ENCODE measurements at regions of chr7 and their contacts with region 1.

Region 1: GRCh38 chr7:50467817-50468610 is 17.9 kb upstream of the FIGNL1 start:
- DNase-seq: peak; percentile 73 to 81 (median 81)
- H3K4me3 ChIP-seq: peak overlapping the region in 2 of 7 experiments; percentile 36 to 65
- H3K27ac ChIP-seq: no peak overlapping the region
- H3K4me1 ChIP-seq: peaks cover 0 to 10% (median 6%) of the 10 kb centered on the region in 4 experiments
- H3K27me3 ChIP-seq: no peaks in the 10 kb centered on the region

Region 2: DNA sequence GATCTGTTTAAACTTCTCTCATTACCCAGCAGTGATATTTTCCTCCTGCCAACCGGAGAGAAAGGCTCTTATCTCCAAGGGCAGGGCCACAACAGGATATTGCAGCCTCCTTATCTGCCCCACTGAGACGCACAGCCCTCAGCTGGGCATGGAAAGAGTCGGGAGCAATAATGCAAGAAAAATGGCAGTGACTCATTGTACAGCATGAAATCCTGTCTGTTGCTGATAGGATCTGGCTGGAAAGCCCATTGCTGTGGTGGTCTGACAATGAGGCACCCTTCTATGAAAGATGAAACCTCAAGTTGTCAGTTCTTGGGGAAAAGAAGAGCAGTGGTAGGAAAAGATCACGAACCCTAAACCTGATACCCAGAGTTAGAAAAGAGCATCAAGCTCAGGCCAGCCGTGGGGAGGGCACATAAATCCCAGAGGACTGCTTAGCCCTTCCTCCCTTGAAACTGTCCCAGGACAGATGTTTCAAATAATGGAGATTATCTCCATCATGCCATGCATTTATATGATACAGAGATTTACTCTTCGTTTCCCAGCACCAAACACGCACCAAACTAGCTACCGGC is 29.1 kb after region 1 on chr7:
- CTCF ChIA-PET with region 1: interaction called, 25 read pairs
- POLR2A ChIA-PET with region 1: no interaction called
- DNase-seq: peak; percentile 93 to 96 (median 93)
- H3K4me3 ChIP-seq: peak overlapping the region in 3 of 7 experiments; percentile 8 to 53 (median 38)
- H3K27ac ChIP-seq: peak overlapping the region; percentile 51 to 74
- H3K4me1 ChIP-seq: peaks cover 10 to 50% (median 26%) of the 10 kb centered on the region in 4 experiments
- H3K27me3 ChIP-seq: no peaks in the 10 kb centered on the region

Region 3: GRCh38 chr7:50587737-50588136 is 119.7 kb after region 1 on chr7:
- CTCF ChIA-PET with region 1: interaction called, 13 read pairs
- POLR2A ChIA-PET with region 1: no interaction called
- DNase-seq: no peak
- H3K4me3 ChIP-seq: no peak overlapping the region
- H3K27ac ChIP-seq: no peak overlapping the region
- H3K4me1 ChIP-seq: no peaks in the 10 kb centered on the region
- H3K27me3 ChIP-seq: no peaks in the 10 kb centered on the region

Region 4: GRCh38 chr7:50610521-50611277 is 142.7 kb after region 1 on chr7:
- CTCF ChIA-PET with region 1: interaction called, 18 read pairs
- POLR2A ChIA-PET with region 1: no interaction called
- DNase-seq: peak; percentile 71 to 96 (median 93)
- H3K4me3 ChIP-seq: no peak overlapping the region
- H3K27ac ChIP-seq: peak overlapping the region in 1 of 2 experiments; percentile 29
- H3K4me1 ChIP-seq: peaks cover 5 to 30% (median 24%) of the 10 kb centered on the region in 4 experiments
- H3K27me3 ChIP-seq: no peaks in the 10 kb centered on the region

Region 5: GRCh38 chr7:50664461-50664922 is 196.5 kb after region 1 on chr7:
- CTCF ChIA-PET with region 1: interaction called, 15 read pairs
- POLR2A ChIA-PET with region 1: no interaction called
- DNase-seq: peak; percentile 53 to 95 (median 90)
- H3K4me3 ChIP-seq: peak overlapping the region in 2 of 7 experiments; percentile 26 to 32
- H3K27ac ChIP-seq: peak overlapping the region in 1 of 2 experiments; percentile 68
- H3K4me1 ChIP-seq: peaks cover 12 to 70% (median 66%) of the 10 kb centered on the region in 4 experiments
- H3K27me3 ChIP-seq: no peaks in the 10 kb centered on the region

Region 6: GRCh38 chr7:51141451-51142003 is 673.5 kb after region 1 on chr7:
- CTCF ChIA-PET with region 1: interaction called, 15 read pairs
- POLR2A ChIA-PET with region 1: no interaction called
- DNase-seq: peak; percentile 57 to 78 (median 74)
- H3K4me3 ChIP-seq: no peak overlapping the region
- H3K27ac ChIP-seq: no peak overlapping the region
- H3K4me1 ChIP-seq: peaks cover 15 to 44% (median 25%) of the 10 kb centered on the region in 4 experiments
- H3K27me3 ChIP-seq: peaks cover 0 to 2% (median 0%) of the 10 kb centered on the region in 5 experiments